T-cell (primary cell): ENCODE measurements at regions of chr1 and their contacts with region 1.

Region 1: GRCh38 chr1:45669859-45670655 is 16.3 kb downstream of the GPBP1L1 start:
- DNase-seq: no peak
- ATAC-seq: no peak
- H3K4me3 ChIP-seq: no peak overlapping the region
- H3K4me3 Mint-ChIP-seq: no peak overlapping the region
- H3K27ac ChIP-seq: no peak overlapping the region
- H3K27ac Mint-ChIP-seq: peak overlapping the region in 1 of 2 donors; percentile 12
- H3K4me1 ChIP-seq: peaks cover 2 to 21% of the 10 kb centered on the region in 2 experiments
- H3K4me1 Mint-ChIP-seq: peaks cover 76 to 82% (median 79%) of the 10 kb centered on the region in 3 donors
- H3K27me3 ChIP-seq: no peaks in the 10 kb centered on the region
- H3K27me3 Mint-ChIP-seq: no peaks in the 10 kb centered on the region

Region 2: GRCh38 chr1:45093334-45093733 is 576.7 kb before region 1 on chr1:
- CTCF ChIA-PET with region 1: no interaction called
- POLR2A ChIA-PET with region 1: no interaction called
- DNase-seq: no peak
- ATAC-seq: no peak
- H3K4me3 ChIP-seq: no peak overlapping the region
- H3K4me3 Mint-ChIP-seq: no peak overlapping the region
- H3K27ac ChIP-seq: no peak overlapping the region
- H3K27ac Mint-ChIP-seq: no peak overlapping the region
- H3K4me1 ChIP-seq: no peaks in the 10 kb centered on the region
- H3K4me1 Mint-ChIP-seq: no peaks in the 10 kb centered on the region
- H3K27me3 ChIP-seq: no peaks in the 10 kb centered on the region
- H3K27me3 Mint-ChIP-seq: no peaks in the 10 kb centered on the region

Region 3: DNA sequence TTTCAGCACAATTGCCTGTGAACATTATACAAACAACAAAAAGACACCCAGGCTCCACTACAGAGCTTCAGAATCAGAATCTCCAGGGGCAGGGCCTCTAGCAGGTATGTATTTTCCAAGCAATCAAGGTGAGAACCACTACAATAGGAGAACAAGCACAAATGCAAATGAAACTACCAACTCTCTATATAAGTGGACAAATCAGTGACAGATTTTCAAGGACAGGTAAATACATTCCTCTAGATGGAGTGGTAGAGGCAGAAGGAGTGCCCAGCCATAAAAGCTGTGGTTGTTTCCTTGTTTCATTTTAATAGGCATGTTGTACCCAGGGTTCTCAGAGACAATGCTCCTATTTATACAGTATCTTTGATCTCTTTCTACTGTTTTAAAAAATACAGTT is 26.1 kb before region 1 on chr1:
- CTCF ChIA-PET with region 1: no interaction called
- POLR2A ChIA-PET with region 1: interaction called in 1 of 2 experiments, 10 read pairs
- DNase-seq: no peak
- ATAC-seq: no peak
- H3K4me3 ChIP-seq: no peak overlapping the region
- H3K4me3 Mint-ChIP-seq: no peak overlapping the region
- H3K27ac ChIP-seq: no peak overlapping the region
- H3K27ac Mint-ChIP-seq: peak overlapping the region in 1 of 2 donors; percentile 7
- H3K4me1 ChIP-seq: no peaks in the 10 kb centered on the region
- H3K4me1 Mint-ChIP-seq: peaks cover 4 to 14% (median 11%) of the 10 kb centered on the region in 3 donors
- H3K27me3 ChIP-seq: no peaks in the 10 kb centered on the region
- H3K27me3 Mint-ChIP-seq: no peaks in the 10 kb centered on the region

Region 4: GRCh38 chr1:45654540-45655280 is 15.3 kb before region 1 on chr1:
- CTCF ChIA-PET with region 1: interaction called in 1 of 2 experiments, 5 read pairs
- POLR2A ChIA-PET with region 1: interaction called in 1 of 2 experiments, 10 read pairs
- DNase-seq: no peak
- ATAC-seq: no peak
- H3K4me3 ChIP-seq: no peak overlapping the region
- H3K4me3 Mint-ChIP-seq: no peak overlapping the region
- H3K27ac ChIP-seq: no peak overlapping the region
- H3K27ac Mint-ChIP-seq: no peak overlapping the region
- H3K4me1 ChIP-seq: no peaks in the 10 kb centered on the region
- H3K4me1 Mint-ChIP-seq: peaks cover 6 to 8% (median 8%) of the 10 kb centered on the region in 3 donors
- H3K27me3 ChIP-seq: no peaks in the 10 kb centered on the region
- H3K27me3 Mint-ChIP-seq: no peaks in the 10 kb centered on the region

Region 5: DNA sequence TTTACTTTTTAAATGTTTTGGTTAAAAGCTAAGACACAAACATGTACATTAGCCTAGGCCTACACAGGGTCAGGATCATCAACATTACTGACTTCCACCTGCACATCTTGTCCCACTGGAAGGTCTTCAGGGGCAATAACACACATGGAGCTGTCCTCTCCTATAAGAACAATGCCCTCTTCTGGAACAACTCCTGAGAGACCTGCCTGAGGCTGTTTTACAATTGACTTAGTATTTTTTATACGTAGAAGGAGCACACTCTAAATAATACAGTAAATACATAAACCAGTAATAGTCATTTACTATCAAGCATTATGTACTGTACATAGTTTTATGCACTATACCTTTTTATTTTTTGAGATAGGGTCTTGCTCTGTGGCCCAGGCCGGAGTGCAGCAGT is 960.7 kb after region 1 on chr1:
- CTCF ChIA-PET with region 1: no interaction called
- POLR2A ChIA-PET with region 1: no interaction called
- DNase-seq: no peak
- ATAC-seq: no peak
- H3K4me3 ChIP-seq: no peak overlapping the region
- H3K4me3 Mint-ChIP-seq: no peak overlapping the region
- H3K27ac ChIP-seq: no peak overlapping the region
- H3K27ac Mint-ChIP-seq: no peak overlapping the region
- H3K4me1 ChIP-seq: no peaks in the 10 kb centered on the region
- H3K4me1 Mint-ChIP-seq: no peaks in the 10 kb centered on the region
- H3K27me3 ChIP-seq: no peaks in the 10 kb centered on the region
- H3K27me3 Mint-ChIP-seq: no peaks in the 10 kb centered on the region